Posterior cingulate gyrus (tissue), 11 donors: ENCODE measurements at regions of chr2 and their contacts with region 1.

Region 1: DNA sequence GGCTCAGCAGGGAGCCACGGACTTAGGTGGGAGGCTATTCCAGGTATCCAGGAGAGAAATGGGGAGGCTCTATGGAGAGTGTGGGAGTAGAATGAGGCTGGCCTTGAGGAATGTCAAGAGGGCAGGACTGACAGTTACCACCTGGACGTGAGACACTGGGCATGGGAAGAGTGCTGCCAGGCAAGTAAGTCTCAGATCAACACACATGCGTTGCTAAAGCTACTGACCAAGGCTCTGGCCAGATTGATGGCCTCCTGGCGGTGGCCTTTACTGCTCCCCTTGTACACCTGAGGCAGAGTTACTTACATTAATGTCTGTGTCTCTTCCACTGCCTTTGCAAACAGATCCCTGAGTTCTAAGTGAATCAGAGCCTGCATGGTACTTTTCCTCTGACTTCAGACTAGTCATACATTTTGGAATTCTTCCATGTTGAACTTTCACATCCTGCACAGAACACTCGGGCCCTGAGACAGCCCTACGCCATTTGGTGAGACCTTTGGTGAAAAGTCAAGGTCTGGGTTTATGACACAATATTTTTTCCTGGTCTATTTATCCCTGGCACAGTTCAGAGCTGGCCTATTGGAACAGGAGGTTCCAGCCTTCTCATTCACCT is 398.8 kb upstream of the TRIB2 start:
- DNase-seq: peak in 1 of 10 donors; percentile 55

Region 2: GRCh38 chr2:11169333-11169732 is 1148.6 kb before region 1 on chr2:
- intact Hi-C with region 1: no loop called
- DNase-seq: peak in 1 of 10 donors; percentile 36

Region 3: GRCh38 chr2:12262681-12263436 is 55.1 kb before region 1 on chr2:
- intact Hi-C with region 1: loop called (anchors 2 kb)
- DNase-seq: peak in 5 of 10 donors; percentile 11 to 73 (median 29)